ENCODE measurements at regions of chr17 and their contacts with region 1.

Region 1: DNA sequence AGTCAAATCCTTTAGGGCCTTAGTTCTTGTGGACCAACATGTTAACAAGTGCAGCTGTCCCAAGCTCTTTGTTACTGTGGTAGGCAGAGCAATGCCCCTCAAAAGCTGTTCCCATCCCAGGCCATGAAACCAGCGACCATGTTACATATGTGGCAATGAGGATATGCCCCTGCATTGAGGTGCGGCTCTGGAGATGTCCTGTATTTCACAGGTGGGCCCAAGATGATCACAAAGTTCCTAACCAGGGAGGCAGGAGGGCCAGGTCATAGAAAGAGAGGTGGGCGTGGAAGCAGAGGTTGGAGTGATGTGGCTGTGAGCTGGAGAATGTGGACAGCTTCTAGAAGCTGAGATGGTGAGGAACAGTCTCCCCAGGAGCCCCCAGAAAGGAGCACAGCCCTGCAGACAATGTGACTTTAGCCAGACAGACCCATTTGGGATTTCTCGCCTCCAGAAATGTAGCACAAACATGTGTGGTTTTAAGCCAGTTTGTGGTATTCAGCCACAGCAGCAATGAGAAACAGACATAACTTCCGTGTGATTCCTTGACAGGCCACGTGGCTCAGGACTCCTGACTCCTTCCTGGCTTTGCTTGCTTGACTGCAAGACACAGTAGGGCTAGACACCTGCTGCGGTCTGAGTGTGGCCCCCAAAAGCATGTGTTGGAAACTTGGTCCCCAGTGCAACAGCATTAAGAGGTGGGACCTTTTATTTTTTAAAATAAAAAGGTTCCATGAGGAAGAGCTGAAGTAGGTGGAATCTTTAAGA is 778.3 kb downstream of the KCNJ18 start:
- DNase-seq: no peak
- ATAC-seq: no peak
- H3K4me3 ChIP-seq: no peak overlapping the region
- H3K27ac ChIP-seq: no peak overlapping the region
- H3K4me1 ChIP-seq: no peaks in the 10 kb centered on the region
- H3K27me3 ChIP-seq: no peaks in the 10 kb centered on the region
- CTCF ChIP-seq: no peak
- POLR2A ChIP-seq: no peak

Region 2: DNA sequence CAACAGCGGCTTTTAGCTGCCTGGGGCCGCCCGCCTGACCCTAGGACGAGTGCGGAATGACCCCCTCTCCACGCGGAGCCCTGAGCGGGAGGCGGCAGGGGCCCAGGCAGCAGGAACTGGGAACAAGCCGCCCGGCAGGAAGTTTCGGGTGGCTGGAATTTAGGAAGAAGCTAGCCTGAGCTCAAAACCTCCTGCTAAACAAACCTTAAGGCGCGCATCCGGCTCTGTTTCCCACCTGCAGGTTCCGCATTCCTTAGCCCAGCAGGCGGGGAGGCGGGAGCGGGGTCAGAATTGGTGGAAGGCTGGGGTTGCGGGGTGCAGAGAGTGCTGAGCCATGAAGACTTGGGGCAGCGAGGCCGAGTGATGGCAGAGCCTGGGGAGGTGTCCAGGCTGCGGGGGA is 35.6 kb after region 1 on chr17:
- in situ Hi-C with region 1: no loop called
- intact Hi-C with region 1: no loop called
- DNase-seq: no peak
- ATAC-seq: no peak
- H3K4me3 ChIP-seq: no peak overlapping the region
- H3K27ac ChIP-seq: no peak overlapping the region
- H3K4me1 ChIP-seq: no peaks in the 10 kb centered on the region
- H3K27me3 ChIP-seq: no peaks in the 10 kb centered on the region
- CTCF ChIP-seq: no peak
- POLR2A ChIP-seq: no peak

Region 3: DNA sequence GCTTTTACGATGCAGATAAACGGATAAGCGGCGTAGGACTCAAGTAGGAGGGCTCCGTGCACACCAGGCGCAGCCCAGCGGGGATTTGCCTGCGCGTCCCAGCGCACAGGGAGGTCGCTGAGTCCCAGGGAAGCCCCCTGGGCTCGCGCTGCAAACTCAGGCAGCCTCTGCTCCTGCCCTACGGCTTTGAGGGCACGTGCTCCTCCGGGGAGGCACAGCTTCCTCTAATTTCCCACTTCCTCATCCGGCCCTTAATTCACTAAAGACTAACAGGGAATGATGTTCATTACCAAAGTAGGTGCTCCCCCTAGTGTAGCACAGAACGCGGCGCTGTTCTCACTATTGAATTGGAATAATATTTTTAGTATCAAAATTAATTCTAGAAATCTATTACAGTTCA is 47.1 kb after region 1 on chr17:
- in situ Hi-C with region 1: no loop called
- intact Hi-C with region 1: loop called (anchors 10 kb)
- DNase-seq: no peak
- ATAC-seq: no peak
- H3K4me3 ChIP-seq: no peak overlapping the region
- H3K27ac ChIP-seq: no peak overlapping the region
- H3K4me1 ChIP-seq: no peaks in the 10 kb centered on the region
- H3K27me3 ChIP-seq: no peaks in the 10 kb centered on the region
- CTCF ChIP-seq: no peak
- POLR2A ChIP-seq: no peak

Measured in gastrocnemius medialis (tissue), 4 donors.